ENCODE measurements at regions of chr19 and their contacts with region 1.

Region 1: DNA sequence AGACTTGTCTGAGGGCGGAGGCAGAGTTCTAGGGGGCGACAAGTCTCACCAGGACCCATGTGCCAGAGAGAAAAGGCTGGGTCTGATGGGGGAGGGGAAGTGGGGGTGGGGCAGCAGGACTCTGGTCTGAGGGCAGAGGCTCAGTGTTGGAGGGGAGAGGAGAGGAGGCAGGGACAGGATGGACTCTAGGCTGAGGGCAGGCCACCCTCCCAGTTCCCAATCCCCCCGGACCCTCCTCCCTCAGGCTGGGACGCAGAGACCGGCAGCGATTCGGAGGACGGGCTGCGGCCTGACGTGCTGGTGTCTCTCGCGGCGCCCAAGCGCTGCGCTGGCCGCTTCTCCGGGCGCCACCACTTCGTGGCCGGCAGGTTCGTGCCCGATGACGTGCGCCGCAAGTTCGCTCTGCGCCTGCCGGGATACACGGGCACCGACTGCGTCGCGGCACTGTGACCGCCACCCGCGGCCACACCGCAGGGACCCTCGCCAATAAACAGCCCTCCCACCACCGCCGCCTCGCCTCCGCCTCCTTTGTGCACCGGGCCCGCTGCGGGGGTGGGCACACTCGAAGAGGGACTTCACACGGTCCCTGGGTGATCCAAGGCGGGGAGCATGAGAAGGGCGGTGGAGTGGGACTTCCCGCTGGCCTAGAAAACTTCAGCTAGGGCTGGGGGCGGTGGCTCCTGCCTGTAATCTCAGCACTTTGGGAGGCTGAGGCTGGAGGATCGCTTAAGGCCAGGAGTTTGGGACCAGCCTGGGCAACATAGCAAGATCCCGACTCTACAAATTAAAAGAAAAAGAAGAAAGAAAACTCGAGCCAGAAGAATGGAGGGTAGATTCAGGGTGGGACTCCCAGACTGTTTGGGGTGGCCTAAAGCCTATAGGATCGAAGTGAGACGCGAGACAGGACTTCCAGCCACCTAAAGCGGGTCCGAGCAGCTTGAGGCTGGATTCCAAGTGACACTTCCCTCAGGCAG is 703 bp upstream of the CILP2 start:
- DNase-seq: peak in 1 of 3 donors; percentile 43
- H3K4me3 ChIP-seq: peak overlapping the region in 2 of 7 experiments; percentile 11 to 17
- H3K27ac ChIP-seq: no peak overlapping the region
- H3K4me1 ChIP-seq: peaks cover 0 to 37% (median 27%) of the 10 kb centered on the region in 4 experiments
- H3K27me3 ChIP-seq: peaks cover 0 to 55% (median 24%) of the 10 kb centered on the region in 5 experiments

Region 2: DNA sequence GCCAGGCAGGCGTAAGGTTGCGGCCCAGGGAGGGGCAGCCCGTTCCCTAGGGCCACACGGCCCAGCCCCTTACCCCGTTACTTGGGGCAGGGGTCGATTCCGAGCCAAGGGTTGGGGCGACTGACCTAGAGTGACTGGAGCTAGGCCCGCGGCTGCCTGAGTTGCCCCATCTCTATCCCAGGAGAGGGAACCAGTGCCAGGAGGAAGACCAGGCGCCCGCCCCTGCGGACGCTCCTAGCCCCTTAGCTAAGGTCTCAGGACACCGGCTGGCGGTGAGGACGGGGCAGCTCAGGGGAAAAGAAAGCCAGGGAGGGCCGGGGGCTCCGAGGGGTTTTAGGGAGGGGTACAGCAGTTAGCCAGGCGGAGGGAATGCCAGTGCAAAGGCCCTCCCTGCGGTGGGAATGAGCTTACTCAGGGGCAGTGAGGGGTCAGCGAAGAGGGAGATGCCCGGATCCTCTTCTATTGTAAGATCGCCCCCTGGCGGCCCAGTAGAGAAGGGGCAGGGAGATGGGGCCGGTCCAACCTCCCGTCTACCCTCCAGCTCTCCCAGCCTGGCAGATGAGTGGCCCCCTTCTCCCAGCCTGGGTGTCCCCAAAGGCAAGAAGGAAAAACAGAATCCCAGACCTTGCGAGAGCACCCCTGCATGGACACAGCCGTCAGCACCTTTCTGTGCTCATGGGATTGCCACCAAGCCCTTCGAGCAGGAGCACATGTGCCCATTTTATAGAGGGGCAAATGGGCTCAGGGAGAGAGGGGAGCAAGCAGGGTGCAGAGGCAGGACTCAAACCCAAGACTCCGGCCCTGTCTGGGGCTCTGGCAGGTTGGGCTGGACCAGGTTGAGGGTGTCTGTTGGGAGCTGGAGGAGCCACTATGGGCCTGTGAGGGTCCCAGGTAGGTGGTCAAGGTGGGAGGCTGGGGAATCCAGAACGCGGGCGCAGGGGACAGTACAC is 17.0 kb after region 1 on chr19:
- CTCF ChIA-PET with region 1: interaction called, 29 read pairs
- POLR2A ChIA-PET with region 1: no interaction called
- DNase-seq: no peak
- H3K4me3 ChIP-seq: no peak overlapping the region
- H3K27ac ChIP-seq: no peak overlapping the region
- H3K4me1 ChIP-seq: no peaks in the 10 kb centered on the region
- H3K27me3 ChIP-seq: no peaks in the 10 kb centered on the region

Measured in common myeloid progenitor, CD34-positive (primary cell).